Activated CD4-positive, alpha-beta memory T cell treated with anti-CD3 and anti-CD28 coated beads for 36 hours (primary cell): ENCODE measurements at regions of chr15 and their contacts with region 1.

Region 1: DNA sequence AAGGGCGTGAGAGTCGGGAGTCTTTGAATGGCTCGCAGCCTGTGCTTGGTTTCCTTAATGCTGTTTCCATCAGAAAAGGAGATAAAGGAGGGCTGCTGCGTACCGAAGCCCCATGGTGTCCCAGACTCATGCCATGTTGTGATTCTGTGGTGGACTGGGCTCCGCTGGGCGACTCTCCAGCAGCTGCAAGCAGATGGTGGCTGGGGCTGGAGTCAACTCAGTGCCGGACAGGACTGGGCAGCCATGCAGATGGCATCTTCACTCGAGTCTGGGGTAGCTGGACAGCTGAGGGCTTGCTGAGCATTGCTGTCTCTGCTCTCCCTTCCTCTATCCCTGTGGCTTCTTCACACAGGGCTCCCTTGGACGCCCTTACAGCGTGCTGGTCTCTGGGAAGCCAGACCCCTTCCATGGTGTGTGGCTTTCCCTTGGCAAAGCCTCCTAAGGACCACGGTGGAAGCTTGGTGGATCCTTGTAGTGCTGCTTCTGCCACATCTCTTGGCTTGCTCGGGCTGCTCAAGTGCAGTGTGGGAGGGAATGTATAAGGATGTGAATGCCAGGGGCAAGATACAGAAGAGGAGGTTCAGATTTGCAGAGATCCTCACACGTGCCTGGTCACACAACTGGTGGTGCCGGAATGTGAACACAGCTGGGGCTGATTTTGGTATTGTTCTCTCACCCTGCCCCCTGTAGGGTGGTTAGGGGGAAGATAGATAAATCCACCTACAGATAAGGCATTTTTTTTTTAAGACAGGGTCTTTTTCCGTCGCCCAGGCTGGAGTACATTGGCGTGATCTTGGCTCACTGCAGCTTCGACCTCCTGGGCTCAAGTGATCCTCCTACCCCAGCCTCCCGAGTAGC is 9.0 kb downstream of the NIPA1 start:
- DNase-seq: no peak
- H3K4me3 Mint-ChIP-seq: no peak overlapping the region
- H3K27ac Mint-ChIP-seq: peak overlapping the region; percentile 58
- H3K4me1 Mint-ChIP-seq: peaks cover 56% of the 10 kb centered on the region
- H3K27me3 Mint-ChIP-seq: no peaks in the 10 kb centered on the region

Region 2: GRCh38 chr15:22780267-22780666 is 15.2 kb before region 1 on chr15:
- CTCF ChIA-PET with region 1: no interaction called
- POLR2A ChIA-PET with region 1: no interaction called
- intact Hi-C with region 1: loop called (anchors 1 kb)
- DNase-seq: no peak
- H3K4me3 Mint-ChIP-seq: no peak overlapping the region
- H3K27ac Mint-ChIP-seq: peak overlapping the region; percentile 38
- H3K4me1 Mint-ChIP-seq: peaks cover 40% of the 10 kb centered on the region
- H3K27me3 Mint-ChIP-seq: no peaks in the 10 kb centered on the region

Region 3: GRCh38 chr15:22861161-22861560 is 65.7 kb after region 1 on chr15:
- CTCF ChIA-PET with region 1: no interaction called
- POLR2A ChIA-PET with region 1: no interaction called
- intact Hi-C with region 1: no loop called
- DNase-seq: no peak
- H3K4me3 Mint-ChIP-seq: no peak overlapping the region
- H3K27ac Mint-ChIP-seq: peak overlapping the region; percentile 23
- H3K4me1 Mint-ChIP-seq: peaks cover 4% of the 10 kb centered on the region
- H3K27me3 Mint-ChIP-seq: no peaks in the 10 kb centered on the region